A673 (cell line): ENCODE measurements at regions of chr15 and their contacts with region 1.

Region 1: DNA sequence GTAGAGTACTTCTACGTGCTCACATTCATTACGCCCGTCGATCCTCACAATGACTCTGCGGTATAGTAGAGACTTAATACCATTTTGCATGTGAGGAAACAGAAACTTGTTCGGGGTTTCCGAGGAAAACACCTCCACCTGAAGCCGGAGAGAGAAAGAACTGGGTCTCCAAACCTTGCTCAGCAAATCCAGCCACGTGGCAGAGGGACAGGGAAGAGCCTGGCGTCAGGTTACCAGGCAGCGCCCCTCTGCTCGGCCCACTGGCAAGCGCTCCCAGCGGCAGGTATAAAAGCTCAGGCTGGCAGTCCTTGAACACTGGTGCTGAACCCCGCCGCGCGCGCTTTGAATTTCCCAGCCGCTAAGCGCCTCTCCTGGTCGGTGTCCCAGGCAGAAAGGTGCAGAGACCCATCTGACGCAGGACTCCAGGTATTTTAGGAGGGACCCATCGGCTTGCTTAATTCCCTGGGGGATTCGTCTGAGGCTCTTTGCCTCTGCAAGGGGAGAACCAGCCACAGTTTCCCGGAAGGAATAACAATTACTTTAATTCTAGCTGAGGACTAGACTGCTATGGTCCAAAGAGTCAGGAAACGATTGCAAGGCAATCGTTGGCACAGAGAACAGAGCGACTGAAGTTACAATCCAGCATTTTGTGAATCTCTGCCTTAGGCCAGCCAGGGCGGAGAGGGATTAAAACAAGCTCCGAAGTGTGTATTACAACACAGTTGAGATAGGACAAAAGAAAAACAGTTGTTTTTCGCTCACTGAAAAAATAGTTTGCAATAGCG is at the start of gene C2CD4A:
- DNase-seq: peak; percentile 69
- H3K4me3 ChIP-seq: peak within 1 kb of the TSS; percentile 52
- H3K27ac ChIP-seq: no peak within 1 kb of the TSS
- H3K4me1 ChIP-seq: peaks cover 13% of the 10 kb centered on the region
- H3K27me3 ChIP-seq: peaks cover 5% of the 10 kb centered on the region
- CTCF ChIP-seq: 0 out of 2 replicates have a peak, but pooled peaks have one; percentile 30
- total RNA-seq, gene C2CD4A: 0.22 and 0.34 TPM in 2 replicates

Region 2: GRCh38 chr15:62109982-62110851 is 43.4 kb after region 1 on chr15:
- CTCF ChIA-PET with region 1: no interaction called
- POLR2A ChIA-PET with region 1: no interaction called
- intact Hi-C with region 1: no loop called
- DNase-seq: peak; percentile 13
- H3K4me3 ChIP-seq: no peak overlapping the region
- H3K27ac ChIP-seq: no peak overlapping the region
- H3K4me1 ChIP-seq: peaks cover 8% of the 10 kb centered on the region
- H3K27me3 ChIP-seq: no peaks in the 10 kb centered on the region
- CTCF ChIP-seq: no peak

Region 3: GRCh38 chr15:62125773-62126172 is 58.9 kb after region 1 on chr15:
- CTCF ChIA-PET with region 1: no interaction called
- POLR2A ChIA-PET with region 1: no interaction called
- intact Hi-C with region 1: loop called (anchors 5 kb)
- DNase-seq: peak; percentile 76
- H3K4me3 ChIP-seq: no peak overlapping the region
- H3K27ac ChIP-seq: no peak overlapping the region
- H3K4me1 ChIP-seq: peaks cover 30% of the 10 kb centered on the region
- H3K27me3 ChIP-seq: no peaks in the 10 kb centered on the region
- CTCF ChIP-seq: peak; percentile 74

Region 4: DNA sequence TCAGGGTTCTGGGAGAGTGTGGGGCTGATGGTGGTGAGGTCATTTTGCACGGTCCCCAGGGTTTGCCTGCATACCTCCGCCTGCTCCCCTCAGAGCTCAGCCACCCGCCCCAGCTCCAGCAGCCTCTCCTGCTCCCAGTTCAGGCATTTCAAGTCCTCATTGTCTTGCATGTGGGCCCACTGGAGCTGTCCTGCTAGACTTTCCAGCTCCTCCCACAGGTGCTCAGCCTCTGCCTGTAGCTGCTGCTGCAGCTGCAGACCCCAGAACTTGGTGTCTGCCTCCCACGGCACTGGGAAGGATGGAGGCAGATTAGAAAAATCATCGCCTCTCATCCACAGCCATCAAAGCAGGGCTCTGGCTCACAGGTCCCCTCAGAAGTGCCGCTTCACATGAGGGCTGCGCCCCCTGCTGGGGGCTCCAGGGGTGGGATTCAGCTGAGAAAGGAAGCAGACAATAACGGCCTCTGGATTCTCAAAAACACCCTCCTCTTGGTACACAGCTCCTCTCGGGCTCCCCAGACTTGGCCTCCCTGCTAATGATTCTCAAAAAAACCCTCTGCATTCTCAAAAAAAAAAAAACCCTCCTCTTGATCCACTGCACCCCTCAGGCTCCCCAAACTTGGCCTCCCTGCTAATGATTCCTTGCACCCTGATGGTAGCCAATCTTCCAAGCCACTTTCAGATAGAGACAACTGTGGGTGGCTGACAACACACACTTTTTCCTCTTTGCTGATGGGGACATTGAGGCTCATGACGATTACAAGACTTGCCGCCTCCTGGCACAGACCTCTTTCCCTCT is 187.5 kb after region 1 on chr15:
- CTCF ChIA-PET with region 1: no interaction called
- POLR2A ChIA-PET with region 1: no interaction called
- intact Hi-C with region 1: loop called (anchors 5 kb)
- DNase-seq: peak; percentile 84
- H3K4me3 ChIP-seq: no peak overlapping the region
- H3K27ac ChIP-seq: no peak overlapping the region
- H3K4me1 ChIP-seq: no peaks in the 10 kb centered on the region
- H3K27me3 ChIP-seq: no peaks in the 10 kb centered on the region
- CTCF ChIP-seq: peak; percentile 89